CD14-positive monocyte (primary cell): ENCODE measurements at regions of chr2 and their contacts with region 1.

Region 1: DNA sequence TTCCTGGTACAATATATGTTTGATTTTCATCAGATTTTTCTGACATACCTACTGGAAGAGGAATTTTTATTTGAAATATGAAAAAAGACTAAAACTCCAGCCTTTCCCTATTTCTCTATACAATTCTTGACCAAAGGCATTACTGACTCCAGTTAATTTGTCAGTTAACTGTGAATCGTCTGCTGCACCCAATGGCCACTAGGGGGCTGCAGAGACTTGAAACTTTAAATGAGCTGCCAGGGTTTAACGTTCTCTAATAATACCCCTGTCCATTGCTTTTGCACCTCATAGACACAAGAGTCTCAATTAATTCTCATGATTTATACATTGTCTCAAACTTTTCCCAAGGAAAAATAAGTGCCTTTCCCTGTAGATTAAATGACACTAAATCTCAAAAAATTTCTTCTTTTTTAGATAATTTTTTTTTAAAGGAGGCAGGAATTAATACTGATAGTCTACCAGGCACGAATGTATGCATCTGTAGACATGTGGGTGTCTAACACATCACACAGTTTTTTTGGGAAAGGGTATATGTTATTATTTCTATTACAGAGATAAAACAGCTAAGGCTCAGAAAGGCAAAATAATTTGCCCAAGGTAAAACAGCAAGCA is 1.8 kb upstream of the ALK start:
- DNase-seq: peak; percentile 5 to 35 (median 24)
- H3K4me3 ChIP-seq: no peak overlapping the region
- H3K4me3 Mint-ChIP-seq: no peak overlapping the region
- H3K27ac ChIP-seq: no peak overlapping the region
- H3K27ac Mint-ChIP-seq: no peak overlapping the region
- H3K4me1 ChIP-seq: peaks cover 5 to 13% of the 10 kb centered on the region in 2 donors
- H3K4me1 Mint-ChIP-seq: peaks cover 11% of the 10 kb centered on the region
- H3K27me3 ChIP-seq: peaks cover 38 to 44% of the 10 kb centered on the region in 2 donors
- H3K27me3 Mint-ChIP-seq: peaks cover 37 to 56% (median 39%) of the 10 kb centered on the region in 3 donors
- CTCF ChIP-seq: peak; percentile 96

Region 2: GRCh38 chr2:29114946-29115609 is 808.1 kb before region 1 on chr2 and contains the start of gene CLIP4:
- intact Hi-C with region 1: no loop called
- DNase-seq: peak; percentile 42 to 49 (median 43)
- H3K4me3 ChIP-seq: peak within 1 kb of the TSS; percentile 65 to 90 (median 74)
- H3K4me3 Mint-ChIP-seq: peak within 1 kb of the TSS; percentile 88 to 91
- H3K27ac ChIP-seq: peak within 1 kb of the TSS; percentile 91 to 95
- H3K27ac Mint-ChIP-seq: peak within 1 kb of the TSS; percentile 96 to 99 (median 99)
- H3K4me1 ChIP-seq: peaks cover 31 to 46% of the 10 kb centered on the region in 2 donors
- H3K4me1 Mint-ChIP-seq: peaks cover 44% of the 10 kb centered on the region
- H3K27me3 ChIP-seq: no peaks in the 10 kb centered on the region
- H3K27me3 Mint-ChIP-seq: peaks cover 0 to 11% (median 0%) of the 10 kb centered on the region in 3 donors
- CTCF ChIP-seq: no peak
- polyA plus RNA-seq, gene CLIP4: 19.6 to 29.8 (median 21.7) TPM

Region 3: DNA sequence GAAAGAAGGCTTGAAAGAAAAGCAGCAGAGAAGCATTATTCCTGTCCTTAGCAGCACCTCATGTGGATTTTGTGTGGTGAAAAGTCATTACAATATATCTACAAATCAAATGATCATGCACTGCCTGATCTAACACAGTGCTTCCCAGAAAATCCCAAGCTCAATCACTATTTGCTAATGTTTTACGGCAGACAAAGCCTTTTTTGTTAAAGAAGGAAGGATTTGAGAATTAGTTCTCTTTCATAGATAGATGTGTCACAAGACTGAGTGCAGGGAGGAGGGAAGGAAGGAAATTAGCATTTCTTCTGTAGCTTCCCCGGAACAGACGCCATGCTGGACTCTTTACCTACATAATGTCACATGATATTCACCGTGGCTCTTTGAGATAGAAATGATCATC is 204.9 kb before region 1 on chr2:
- intact Hi-C with region 1: no loop called
- DNase-seq: no peak
- H3K4me3 ChIP-seq: no peak overlapping the region
- H3K4me3 Mint-ChIP-seq: no peak overlapping the region
- H3K27ac ChIP-seq: no peak overlapping the region
- H3K27ac Mint-ChIP-seq: no peak overlapping the region
- H3K4me1 ChIP-seq: no peaks in the 10 kb centered on the region
- H3K4me1 Mint-ChIP-seq: no peaks in the 10 kb centered on the region
- H3K27me3 ChIP-seq: no peaks in the 10 kb centered on the region
- H3K27me3 Mint-ChIP-seq: peaks cover 0 to 3% (median 0%) of the 10 kb centered on the region in 3 donors
- CTCF ChIP-seq: no peak

Region 4: DNA sequence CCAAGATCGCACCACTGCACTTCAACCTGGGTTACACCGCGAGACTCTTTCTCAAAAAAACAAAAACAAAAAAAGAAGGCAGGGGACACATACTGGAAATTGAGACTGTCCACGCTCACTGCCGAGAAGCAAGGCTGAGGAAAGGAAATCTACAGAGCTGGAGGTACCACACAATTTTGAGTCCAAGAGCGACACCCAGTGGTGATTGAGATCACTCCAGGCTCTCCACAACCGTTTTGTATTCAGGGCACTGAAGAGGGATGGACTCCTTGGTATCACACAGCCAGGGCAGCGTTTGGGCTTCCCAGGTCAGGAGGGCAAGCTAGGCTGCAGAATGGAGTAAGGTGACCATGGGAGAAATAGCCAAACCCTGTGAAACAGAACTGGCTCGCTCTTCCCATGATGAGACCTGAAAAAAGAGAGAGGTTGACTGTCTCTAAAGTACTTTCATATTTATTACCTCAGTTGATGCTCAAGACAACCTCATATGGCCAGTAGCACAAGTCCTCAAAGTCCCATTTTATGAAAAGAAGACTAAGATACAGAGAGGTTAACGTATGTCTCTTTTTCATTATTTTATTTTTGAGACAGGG is 149.1 kb after region 1 on chr2:
- intact Hi-C with region 1: loop called in 1 of 2 experiments (anchors 10 kb)
- DNase-seq: peak; percentile 3 to 36 (median 25)
- H3K4me3 ChIP-seq: no peak overlapping the region
- H3K4me3 Mint-ChIP-seq: no peak overlapping the region
- H3K27ac ChIP-seq: no peak overlapping the region
- H3K27ac Mint-ChIP-seq: no peak overlapping the region
- H3K4me1 ChIP-seq: no peaks in the 10 kb centered on the region
- H3K4me1 Mint-ChIP-seq: no peaks in the 10 kb centered on the region
- H3K27me3 ChIP-seq: peaks cover 2 to 4% of the 10 kb centered on the region in 2 donors
- H3K27me3 Mint-ChIP-seq: peaks cover 17 to 20% (median 18%) of the 10 kb centered on the region in 3 donors
- CTCF ChIP-seq: peak; percentile 73